Right ventricle myocardium inferior (tissue), 1 donor: ENCODE measurements at regions of chr10 and their contacts with region 1.

Region 1: GRCh38 chr10:44386546-44387052 is 1.7 kb upstream of the CXCL12 start:
- DNase-seq: peak; percentile 81
- ATAC-seq: peak; percentile 80

Region 2: GRCh38 chr10:43689955-43690771 is 696.4 kb before region 1 on chr10:
- intact Hi-C with region 1: loop called (anchors 5 kb)
- DNase-seq: peak; percentile 92
- ATAC-seq: peak; percentile 98

Region 3: DNA sequence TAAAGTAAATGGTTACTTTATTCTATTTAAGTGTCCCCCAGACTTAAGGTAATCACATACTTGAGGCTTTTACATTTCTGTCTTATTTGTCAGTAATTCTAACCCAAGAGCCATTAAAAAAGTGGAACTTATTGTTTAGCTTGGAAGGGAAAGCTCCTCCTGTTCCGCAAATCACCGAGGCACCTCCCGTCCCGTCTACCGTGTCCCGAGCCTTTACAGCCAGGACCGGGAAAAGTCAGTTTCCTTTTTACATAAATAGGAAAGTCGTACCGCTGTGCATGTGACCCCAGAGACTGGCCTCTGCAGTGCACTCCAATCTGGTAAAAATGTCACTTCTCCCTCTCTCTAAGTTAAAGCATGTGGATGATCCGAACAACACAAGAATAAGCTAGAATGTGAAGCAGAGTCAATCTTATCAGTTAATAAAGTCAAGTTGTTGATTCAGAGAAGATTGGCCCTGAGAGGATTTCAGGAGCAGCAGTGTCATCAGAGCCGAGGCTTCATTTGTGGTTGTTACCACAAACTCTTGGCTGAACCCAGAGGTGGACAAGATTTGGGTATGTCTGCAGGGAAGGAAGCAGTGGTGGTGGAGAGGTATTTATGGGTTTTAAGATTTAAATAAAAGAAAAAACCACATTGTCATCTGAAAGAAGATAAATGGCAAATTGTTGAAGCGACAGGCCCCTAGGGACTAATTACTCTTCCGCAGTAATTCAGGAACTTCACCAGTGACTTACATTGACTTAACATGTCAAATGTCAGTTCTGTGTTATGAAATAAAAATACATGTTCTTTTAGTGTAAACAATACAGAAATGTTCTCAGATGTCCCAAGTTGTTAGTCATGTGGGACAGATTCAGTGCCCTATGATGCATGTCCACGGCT is 421.3 kb before region 1 on chr10:
- intact Hi-C with region 1: loop called (anchors 10 kb)
- DNase-seq: no peak
- ATAC-seq: peak; percentile 27

Region 4: DNA sequence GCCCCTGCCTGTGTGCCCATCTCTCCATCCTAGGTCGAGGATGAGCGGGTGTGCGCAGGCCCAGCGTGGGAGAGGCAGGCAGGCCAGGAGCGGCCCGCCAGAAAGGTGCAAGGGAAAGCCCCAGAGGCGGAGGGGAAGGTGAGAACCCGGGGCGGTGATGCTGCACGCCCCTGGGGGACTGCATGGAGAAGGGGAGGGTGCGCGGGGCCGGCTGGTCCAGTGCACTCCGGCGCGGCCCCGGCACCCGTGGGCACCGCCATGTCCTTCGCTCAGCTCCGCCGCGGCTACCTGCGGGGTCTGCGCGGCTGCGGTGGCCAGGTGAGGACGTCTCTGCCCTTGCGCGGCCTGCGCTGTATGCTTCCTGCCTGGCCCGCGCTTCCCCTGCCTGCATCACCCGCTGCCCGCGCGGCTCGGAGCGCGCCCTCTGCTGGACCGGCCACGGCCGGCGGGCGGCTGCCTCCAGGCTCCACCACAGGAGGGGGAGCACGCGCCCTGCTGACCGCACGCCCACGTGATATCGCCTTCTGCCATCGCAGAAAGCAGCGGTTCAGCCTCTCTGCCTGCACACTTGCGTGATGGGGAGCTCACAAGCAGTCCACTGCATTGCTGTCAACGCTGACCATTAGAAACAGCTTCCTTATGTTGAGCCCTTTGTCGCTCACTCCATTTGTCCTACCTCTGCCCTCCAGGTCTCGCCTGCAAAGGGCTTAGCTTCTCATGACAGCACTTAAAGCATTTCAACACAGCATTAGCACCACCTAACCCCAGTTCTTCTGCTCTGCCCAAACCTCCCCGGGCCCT is 75.6 kb before region 1 on chr10:
- intact Hi-C with region 1: loop called (anchors 2 kb)
- DNase-seq: peak; percentile 91
- ATAC-seq: peak; percentile 98

Region 5: DNA sequence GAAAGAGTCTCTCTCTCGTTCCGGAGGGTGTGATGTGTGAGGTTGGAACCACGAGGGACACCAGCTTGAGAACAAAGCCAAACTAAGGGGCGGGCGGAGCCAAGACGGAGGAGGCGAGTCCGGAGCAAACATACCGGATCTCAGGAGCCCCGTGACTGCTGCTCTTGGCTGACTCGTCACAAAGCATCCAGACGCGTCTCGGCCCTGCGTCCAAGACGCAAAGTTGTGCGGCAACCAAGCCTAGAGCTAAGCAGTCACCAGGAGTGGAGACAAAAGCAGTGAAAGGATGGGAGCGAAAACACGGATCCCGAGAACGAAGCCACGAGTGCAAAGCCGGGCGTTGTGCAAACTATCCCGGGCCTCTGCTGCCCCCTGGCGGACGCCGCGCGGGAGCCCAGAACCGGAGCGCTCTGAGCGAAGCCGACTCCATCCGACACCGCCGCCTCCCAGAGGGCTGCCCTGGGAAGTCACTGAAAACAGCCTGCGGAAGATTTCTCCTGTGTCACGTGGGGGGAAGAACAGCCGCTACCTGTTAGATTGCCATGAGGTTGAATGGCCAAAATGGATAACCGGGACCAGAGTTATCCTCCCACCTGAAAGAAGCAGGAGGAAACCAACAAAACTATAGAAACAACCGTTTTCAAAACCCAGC is 478.2 kb after region 1 on chr10:
- intact Hi-C with region 1: loop called (anchors 2 kb)
- DNase-seq: peak; percentile 94
- ATAC-seq: peak; percentile 96